K562 (cell line): ENCODE measurements at regions of chr6 and their contacts with region 1.

Region 1: GRCh38 chr6:43221046-43221972 is 8.0 kb downstream of the DNPH1 start:
- DNase-seq: no peak
- ATAC-seq: no peak
- H3K4me3 ChIP-seq: no peak overlapping the region
- H3K27ac ChIP-seq: no peak overlapping the region
- H3K4me1 ChIP-seq: peaks cover 14 to 36% of the 10 kb centered on the region in 2 experiments; a peak in 4 of 5 replicates
- H3K27me3 ChIP-seq: no peaks in the 10 kb centered on the region
- CTCF ChIP-seq: no peak
- EP300 ChIP-seq: no peak
- POLR2A ChIP-seq: 0 out of 2 replicates have a peak, but pooled peaks have one; percentile 20
- RAD21 ChIP-seq: no peak

Region 2: GRCh38 chr6:43200541-43200940 is 20.8 kb before region 1 on chr6:
- CTCF ChIA-PET with region 1: no interaction called
- POLR2A ChIA-PET with region 1: interaction called, 15 read pairs
- in situ Hi-C with region 1: no loop called
- intact Hi-C with region 1: no loop called
- DNase-seq: no peak
- ATAC-seq: no peak
- H3K4me3 ChIP-seq: no peak overlapping the region
- H3K27ac ChIP-seq: no peak overlapping the region
- H3K4me1 ChIP-seq: peaks cover 0 to 3% of the 10 kb centered on the region in 2 experiments; a peak in 2 of 5 replicates
- H3K27me3 ChIP-seq: no peaks in the 10 kb centered on the region
- CTCF ChIP-seq: no peak
- EP300 ChIP-seq: no peak
- POLR2A ChIP-seq: no peak
- RAD21 ChIP-seq: no peak

Region 3: DNA sequence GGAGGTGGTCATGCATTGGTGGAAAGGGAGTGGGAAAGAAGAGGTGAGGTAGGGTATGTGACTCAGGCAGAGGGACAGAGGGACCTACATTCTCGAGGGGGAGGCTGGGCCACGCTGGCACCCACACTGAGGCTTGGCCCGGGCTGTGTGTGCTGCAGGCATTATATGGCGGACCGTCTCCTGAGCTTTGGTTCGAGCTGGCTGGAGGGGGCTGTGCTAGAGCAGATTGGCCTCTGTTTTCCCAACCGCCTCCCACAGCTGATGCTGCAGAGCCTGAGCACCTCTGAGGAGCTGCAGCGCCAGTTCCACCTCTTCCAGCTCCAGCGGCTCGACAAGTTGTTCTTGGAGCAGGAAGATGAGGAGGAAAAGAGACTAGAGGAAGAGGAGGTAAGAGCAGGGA is 15.5 kb before region 1 on chr6:
- CTCF ChIA-PET with region 1: no interaction called
- POLR2A ChIA-PET with region 1: interaction called, 15 read pairs
- in situ Hi-C with region 1: no loop called
- intact Hi-C with region 1: no loop called
- DNase-seq: no peak
- ATAC-seq: peak; percentile 22; the same call in 2 of the 3 replicates
- H3K4me3 ChIP-seq: no peak overlapping the region
- H3K27ac ChIP-seq: no peak overlapping the region
- H3K4me1 ChIP-seq: peaks cover 0 to 3% of the 10 kb centered on the region in 2 experiments; a peak in 1 of 5 replicates
- H3K27me3 ChIP-seq: no peaks in the 10 kb centered on the region
- CTCF ChIP-seq: no peak
- EP300 ChIP-seq: no peak
- POLR2A ChIP-seq: no peak
- RAD21 ChIP-seq: no peak

Region 4: DNA sequence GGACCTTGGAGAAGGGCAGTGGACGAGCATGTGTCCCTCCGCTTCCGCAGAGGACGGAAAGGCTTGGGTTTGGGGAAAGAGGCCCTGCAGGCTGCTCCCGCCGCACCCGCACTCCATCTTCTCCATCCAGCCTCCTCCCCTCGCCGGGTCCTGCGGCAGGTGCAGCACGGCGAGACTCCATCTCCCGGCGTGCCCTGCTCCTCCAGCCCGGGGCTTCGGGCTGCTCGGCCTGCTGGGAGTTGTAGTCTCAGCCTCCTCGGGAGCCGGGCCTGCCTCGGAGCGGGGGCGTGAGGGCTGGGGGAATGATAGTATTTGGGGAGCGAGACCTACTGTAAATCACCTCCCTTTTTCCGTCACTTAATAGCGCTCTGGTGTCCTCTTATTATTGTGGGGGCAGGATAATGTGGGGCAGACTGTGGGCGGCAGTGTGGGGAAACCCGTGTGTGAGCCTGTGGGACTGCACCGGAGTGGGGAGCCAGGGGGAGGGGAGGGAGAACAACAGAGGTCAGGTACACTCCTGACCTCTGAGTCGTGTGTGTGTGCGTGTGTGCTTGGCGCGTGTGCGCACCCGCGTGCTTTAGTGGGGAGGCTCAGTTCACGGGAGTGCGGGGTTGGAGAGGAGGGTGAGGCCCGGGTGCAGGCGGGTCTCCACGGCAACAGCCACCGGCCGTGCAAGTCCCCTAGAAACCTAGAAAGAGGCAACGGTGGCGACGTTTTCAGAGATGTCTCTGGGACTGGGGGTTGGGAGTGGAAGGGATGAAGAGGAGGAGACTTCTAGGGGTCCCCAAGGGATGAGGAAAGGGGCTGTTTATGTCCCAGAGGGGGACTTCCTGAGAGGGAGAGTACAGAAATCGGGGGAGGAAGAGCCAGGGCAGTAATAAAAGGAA is 26.0 kb after region 1 on chr6:
- CTCF ChIA-PET with region 1: no interaction called
- POLR2A ChIA-PET with region 1: no interaction called
- in situ Hi-C with region 1: no loop called
- intact Hi-C with region 1: no loop called
- DNase-seq: peak; percentile 83 to 94 (median 93)
- ATAC-seq: peak; percentile 99
- H3K4me3 ChIP-seq: peak overlapping the region; percentile 39
- H3K27ac ChIP-seq: no peak overlapping the region
- H3K4me1 ChIP-seq: peaks cover 10 to 24% of the 10 kb centered on the region in 2 experiments
- H3K27me3 ChIP-seq: peaks cover 54 to 82% of the 10 kb centered on the region in 2 experiments
- CTCF ChIP-seq: peak in 1 of 3 experiments; percentile 0; a peak in 1 of 6 replicates
- EP300 ChIP-seq: no peak
- POLR2A ChIP-seq: no peak
- RAD21 ChIP-seq: no peak